Colonic mucosa (tissue), 4 donors: ENCODE measurements at regions of chr7 and their contacts with region 1.

Region 1: GRCh38 chr7:67493366-67493765 is 496.7 kb downstream of the TYW1 start:
- DNase-seq: no peak
- H3K4me3 ChIP-seq: no peak overlapping the region
- H3K27ac ChIP-seq: no peak overlapping the region
- H3K4me1 ChIP-seq: no peaks in the 10 kb centered on the region
- H3K27me3 ChIP-seq: no peaks in the 10 kb centered on the region
- CTCF ChIP-seq: no peak

Region 2: GRCh38 chr7:66654123-66654732 is 839.1 kb before region 1 on chr7:
- intact Hi-C with region 1: no loop called
- DNase-seq: peak; percentile 99
- H3K4me3 ChIP-seq: peak overlapping the region; percentile 79
- H3K27ac ChIP-seq: peak overlapping the region; percentile 97
- H3K4me1 ChIP-seq: no peaks in the 10 kb centered on the region
- H3K27me3 ChIP-seq: no peaks in the 10 kb centered on the region
- CTCF ChIP-seq: no peak

Region 3: GRCh38 chr7:67542916-67543315 is 49.5 kb after region 1 on chr7:
- intact Hi-C with region 1: loop called (anchors 5 kb)
- DNase-seq: no peak
- H3K4me3 ChIP-seq: no peak overlapping the region
- H3K27ac ChIP-seq: no peak overlapping the region
- H3K4me1 ChIP-seq: no peaks in the 10 kb centered on the region
- H3K27me3 ChIP-seq: no peaks in the 10 kb centered on the region
- CTCF ChIP-seq: no peak